ENCODE measurements at regions of chr6 and their contacts with region 1.

Region 1: DNA sequence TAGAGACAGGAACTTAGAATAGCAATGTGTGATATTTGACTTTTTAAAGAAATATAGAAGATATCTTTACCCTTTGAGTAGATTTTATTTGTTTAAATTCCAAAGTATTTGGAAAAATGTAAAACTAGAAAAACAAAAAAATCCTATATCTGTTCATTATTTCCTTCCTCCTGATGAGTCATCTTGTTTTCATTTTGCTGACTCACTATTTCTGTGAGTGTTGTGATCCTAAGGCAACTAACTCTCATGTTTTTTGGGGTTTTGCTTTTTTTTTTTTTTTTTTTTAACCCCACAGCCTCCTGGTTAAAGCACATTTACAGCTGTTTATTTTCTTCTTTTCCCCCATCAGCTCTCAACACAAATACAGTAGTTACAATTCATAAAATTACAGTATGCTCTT is 37.8 kb upstream of the THEMIS start:
- DNase-seq: no peak
- ATAC-seq: peak; percentile 15
- H3K4me3 Mint-ChIP-seq: no peak overlapping the region
- H3K27ac Mint-ChIP-seq: peak overlapping the region; percentile 48
- H3K4me1 Mint-ChIP-seq: peaks cover 47% of the 10 kb centered on the region
- H3K27me3 Mint-ChIP-seq: no peaks in the 10 kb centered on the region

Region 2: DNA sequence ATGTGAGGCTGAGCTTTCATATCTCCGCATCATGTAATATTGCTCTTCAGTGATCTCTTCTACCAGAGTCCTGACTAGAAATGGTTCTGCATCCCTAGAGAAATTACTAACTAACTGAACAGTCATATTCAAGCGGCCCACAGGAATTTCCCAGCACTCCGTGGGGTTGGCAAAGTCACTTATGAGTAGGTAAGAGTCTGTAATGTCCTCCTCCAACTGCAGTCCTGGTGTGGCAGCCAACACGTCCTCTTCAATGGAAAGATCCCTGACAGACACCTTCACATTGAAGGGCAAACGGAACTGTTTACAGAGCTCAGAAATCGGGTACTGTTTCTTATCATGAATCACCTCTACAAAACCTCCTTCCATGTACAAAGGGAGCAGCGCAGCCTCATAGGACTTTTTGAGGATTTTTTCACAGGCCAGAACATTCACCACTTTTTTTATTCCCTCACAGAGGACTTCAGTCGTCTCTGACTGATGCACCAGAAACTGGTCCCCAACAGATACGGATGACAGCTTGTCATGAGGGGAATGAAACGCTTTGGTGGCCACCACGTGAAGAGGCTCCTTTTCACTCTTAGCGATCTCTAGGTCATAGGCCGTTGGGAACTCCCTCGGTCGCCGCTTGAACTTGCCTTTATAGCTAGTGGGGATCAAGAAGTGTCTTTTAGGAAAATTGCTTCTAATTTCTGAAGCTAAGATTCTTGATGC is 125.6 kb before region 1 on chr6:
- CTCF ChIA-PET with region 1: no interaction called
- POLR2A ChIA-PET with region 1: no interaction called
- intact Hi-C with region 1: no loop called
- DNase-seq: peak; percentile 71
- ATAC-seq: peak; percentile 81
- H3K4me3 Mint-ChIP-seq: peak overlapping the region; percentile 57
- H3K27ac Mint-ChIP-seq: peak overlapping the region; percentile 84
- H3K4me1 Mint-ChIP-seq: peaks cover 88% of the 10 kb centered on the region
- H3K27me3 Mint-ChIP-seq: no peaks in the 10 kb centered on the region

Region 3: GRCh38 chr6:127918506-127919427 is 19.9 kb before region 1 on chr6:
- CTCF ChIA-PET with region 1: interaction called, 4 read pairs
- POLR2A ChIA-PET with region 1: interaction called, 3 read pairs
- intact Hi-C with region 1: loop called in 1 of 2 experiments (anchors 2 kb)
- DNase-seq: no peak
- ATAC-seq: peak; percentile 88
- H3K4me3 Mint-ChIP-seq: peak overlapping the region; percentile 55
- H3K27ac Mint-ChIP-seq: peak overlapping the region; percentile 85
- H3K4me1 Mint-ChIP-seq: peaks cover 86% of the 10 kb centered on the region
- H3K27me3 Mint-ChIP-seq: no peaks in the 10 kb centered on the region

Region 4: GRCh38 chr6:127924440-127924839 is 14.3 kb before region 1 on chr6:
- CTCF ChIA-PET with region 1: interaction called, 4 read pairs
- POLR2A ChIA-PET with region 1: no interaction called
- intact Hi-C with region 1: loop called (anchors 1 to 2 kb)
- DNase-seq: peak; percentile 22
- ATAC-seq: peak; percentile 83
- H3K4me3 Mint-ChIP-seq: no peak overlapping the region
- H3K27ac Mint-ChIP-seq: peak overlapping the region; percentile 40
- H3K4me1 Mint-ChIP-seq: peaks cover 58% of the 10 kb centered on the region
- H3K27me3 Mint-ChIP-seq: no peaks in the 10 kb centered on the region

Region 5: GRCh38 chr6:127951172-127951917 is 12.6 kb after region 1 on chr6:
- CTCF ChIA-PET with region 1: interaction called, 3 read pairs
- POLR2A ChIA-PET with region 1: no interaction called
- intact Hi-C with region 1: loop called in 1 of 2 experiments (anchors 2 kb)
- DNase-seq: no peak
- ATAC-seq: peak; percentile 68
- H3K4me3 Mint-ChIP-seq: peak overlapping the region; percentile 2
- H3K27ac Mint-ChIP-seq: peak overlapping the region; percentile 44
- H3K4me1 Mint-ChIP-seq: peaks cover 57% of the 10 kb centered on the region
- H3K27me3 Mint-ChIP-seq: no peaks in the 10 kb centered on the region

Region 6: GRCh38 chr6:128370072-128370471 is 431.4 kb after region 1 on chr6:
- CTCF ChIA-PET with region 1: no interaction called
- POLR2A ChIA-PET with region 1: no interaction called
- intact Hi-C with region 1: no loop called
- DNase-seq: no peak
- ATAC-seq: peak; percentile 47
- H3K4me3 Mint-ChIP-seq: no peak overlapping the region
- H3K27ac Mint-ChIP-seq: no peak overlapping the region
- H3K4me1 Mint-ChIP-seq: peaks cover under 1% of the 10 kb centered on the region
- H3K27me3 Mint-ChIP-seq: no peaks in the 10 kb centered on the region